Sigmoid colon (tissue), 7 donors: ENCODE measurements at regions of chr22 and their contacts with region 1.

Region 1: GRCh38 chr22:35582861-35583670 is 34.1 kb downstream of the MB start:
- DNase-seq: peak; percentile 86
- H3K4me3 ChIP-seq: no peak overlapping the region
- H3K27ac ChIP-seq: peak overlapping the region in 3 of 4 donors; percentile 76 to 78 (median 77)
- H3K4me1 ChIP-seq: peaks cover 0 to 42% (median 31%) of the 10 kb centered on the region in 4 donors
- H3K27me3 ChIP-seq: no peaks in the 10 kb centered on the region
- CTCF ChIP-seq: peak; percentile 93 to 96 (median 95)
- EP300 ChIP-seq: no peak
- POLR2A ChIP-seq: no peak

Region 2: DNA sequence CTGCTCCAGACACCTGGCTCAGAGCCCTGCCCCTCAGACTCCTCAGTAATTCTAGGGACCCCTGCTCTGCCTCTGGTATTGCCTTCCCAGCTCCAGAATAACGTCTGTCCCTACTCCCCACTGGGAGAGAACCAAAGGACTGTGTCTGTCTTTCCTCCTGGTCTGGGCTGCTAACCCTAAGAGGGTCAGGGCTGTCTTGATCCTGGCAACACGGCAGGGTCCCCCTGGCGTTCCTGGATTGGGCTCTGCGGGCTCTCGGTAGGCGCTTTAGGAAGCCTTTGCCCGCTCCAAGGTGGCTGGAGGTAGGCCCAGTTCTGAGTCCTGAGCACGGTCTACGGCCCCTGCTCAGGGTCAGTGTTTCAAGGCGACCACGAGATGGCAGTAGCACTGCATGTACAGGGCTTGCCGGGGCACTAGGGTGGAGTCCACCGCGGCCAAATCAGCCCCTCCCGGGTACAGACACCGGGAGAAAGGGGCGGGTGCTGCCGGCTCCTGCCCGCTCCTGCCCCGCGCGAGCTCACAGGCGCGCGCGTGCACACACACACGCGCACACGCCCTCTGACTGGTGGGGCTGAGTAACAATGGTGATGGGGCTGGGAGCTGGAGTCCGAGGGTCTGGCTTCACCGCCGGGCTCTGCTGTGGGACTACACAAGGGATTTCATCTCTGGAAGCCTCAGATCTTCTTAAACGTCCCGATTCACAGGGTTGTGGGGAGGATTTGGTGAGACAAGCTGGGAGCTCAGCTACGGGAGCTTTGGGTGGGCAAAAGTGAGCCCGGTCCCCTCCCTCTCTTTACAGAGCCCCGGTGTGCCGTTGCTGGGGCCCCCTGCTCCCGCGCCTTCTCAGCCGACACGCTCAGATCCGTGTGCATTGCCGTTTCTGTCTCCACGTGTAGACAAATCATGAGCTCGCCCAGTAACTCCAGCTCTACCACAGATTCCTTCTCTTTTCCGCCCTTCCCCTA is 232.2 kb before region 1 on chr22:
- intact Hi-C with region 1: loop called (anchors 2 kb)
- DNase-seq: peak; percentile 98
- H3K4me3 ChIP-seq: peak overlapping the region; percentile 27 to 57 (median 52)
- H3K27ac ChIP-seq: peak overlapping the region; percentile 82 to 88 (median 85)
- H3K4me1 ChIP-seq: peaks cover 6 to 41% (median 25%) of the 10 kb centered on the region in 4 donors
- H3K27me3 ChIP-seq: no peaks in the 10 kb centered on the region
- CTCF ChIP-seq: peak; percentile 79 to 97 (median 89)
- EP300 ChIP-seq: peak in 1 of 4 donors; percentile 34
- POLR2A ChIP-seq: peak in 1 of 2 donors; percentile 44

Region 3: GRCh38 chr22:35430897-35431322 is 152.2 kb before region 1 on chr22:
- intact Hi-C with region 1: loop called (anchors 1 kb)
- DNase-seq: peak; percentile 97
- H3K4me3 ChIP-seq: no peak overlapping the region
- H3K27ac ChIP-seq: peak overlapping the region; percentile 45 to 76 (median 73)
- H3K4me1 ChIP-seq: peaks cover 0 to 22% (median 19%) of the 10 kb centered on the region in 4 donors
- H3K27me3 ChIP-seq: no peaks in the 10 kb centered on the region
- CTCF ChIP-seq: peak; percentile 98 to 99 (median 99)
- EP300 ChIP-seq: peak in 3 of 4 donors; percentile 22 to 78 (median 55)
- POLR2A ChIP-seq: no peak

Region 4: DNA sequence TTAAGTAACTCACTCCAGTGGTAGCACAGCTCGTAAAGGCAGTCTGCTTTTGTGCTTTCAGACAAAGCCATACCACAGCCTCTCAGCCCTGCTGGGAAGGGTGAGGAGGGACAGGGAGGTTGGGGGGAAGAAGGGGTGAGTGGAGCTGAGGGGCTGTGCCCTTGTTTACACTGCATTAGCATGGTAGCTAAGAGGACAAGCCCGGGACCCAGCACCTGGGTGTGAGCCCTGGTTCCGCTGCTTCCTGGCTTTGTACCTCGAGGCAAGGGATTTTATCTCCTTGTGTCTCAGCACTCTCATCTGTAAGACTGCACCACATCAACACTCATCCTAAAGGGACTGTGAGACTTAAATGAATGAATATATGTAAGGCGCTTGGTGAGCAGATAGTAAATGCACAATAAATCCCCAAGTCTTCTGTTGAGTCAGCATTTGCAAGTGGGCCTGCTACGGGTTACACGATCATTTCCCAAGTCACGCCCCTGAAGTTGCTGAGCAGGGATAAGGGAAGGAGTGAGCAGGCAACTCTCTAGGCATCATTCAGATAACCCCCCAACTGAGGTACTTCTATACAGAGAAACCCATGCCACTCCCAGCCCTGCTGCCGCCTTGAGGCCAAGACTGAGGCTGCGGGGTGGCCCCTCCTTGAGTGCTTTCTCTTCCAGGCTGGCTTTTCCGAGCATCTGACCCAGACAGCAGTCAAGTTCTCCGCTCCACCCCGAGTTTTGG is 34.9 kb before region 1 on chr22:
- intact Hi-C with region 1: loop called (anchors 5 kb)
- DNase-seq: no peak
- H3K4me3 ChIP-seq: no peak overlapping the region
- H3K27ac ChIP-seq: peak overlapping the region in 3 of 4 donors; percentile 25 to 57 (median 55)
- H3K4me1 ChIP-seq: peaks cover 0 to 28% (median 23%) of the 10 kb centered on the region in 4 donors
- H3K27me3 ChIP-seq: no peaks in the 10 kb centered on the region
- CTCF ChIP-seq: no peak
- EP300 ChIP-seq: no peak
- POLR2A ChIP-seq: no peak

Region 5: DNA sequence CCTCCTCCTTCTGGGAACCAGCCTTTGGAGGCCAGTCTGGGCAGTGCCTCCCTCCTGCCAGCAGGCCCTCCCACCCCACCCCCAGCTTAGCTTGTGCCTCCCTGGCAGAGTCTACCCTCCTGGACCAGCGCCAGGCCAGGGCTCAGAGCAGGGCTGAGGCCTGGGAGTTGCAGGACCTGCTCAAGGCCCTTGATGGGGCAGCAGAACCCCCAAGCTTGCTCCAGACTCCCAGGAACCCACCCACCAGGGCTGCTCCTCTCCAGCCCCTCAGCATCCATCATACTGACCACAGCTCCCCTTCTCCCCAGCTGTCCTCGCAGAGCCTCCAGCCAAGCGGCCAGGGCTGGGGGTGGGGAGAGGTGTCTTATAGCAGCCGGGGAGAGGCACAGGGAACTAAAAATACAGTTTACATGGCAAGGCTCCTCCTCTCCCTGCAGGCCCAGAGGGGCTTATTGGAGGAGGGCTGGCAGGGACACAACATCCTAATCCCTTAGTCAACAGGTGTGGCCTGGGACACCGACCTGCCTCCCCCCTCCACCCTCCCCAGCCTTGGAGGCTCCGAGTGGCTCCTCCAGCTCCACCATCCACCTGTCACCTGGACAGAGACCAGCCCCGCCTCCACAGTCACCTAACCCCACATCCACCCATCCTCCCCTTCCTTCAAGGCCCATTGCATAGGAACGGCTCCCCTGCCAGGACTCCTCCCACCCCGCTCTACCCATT is 39.3 kb after region 1 on chr22:
- intact Hi-C with region 1: loop called (anchors 2 kb)
- DNase-seq: peak; percentile 88
- H3K4me3 ChIP-seq: no peak overlapping the region
- H3K27ac ChIP-seq: peak overlapping the region; percentile 80 to 85 (median 82)
- H3K4me1 ChIP-seq: peaks cover 0 to 42% (median 36%) of the 10 kb centered on the region in 4 donors
- H3K27me3 ChIP-seq: no peaks in the 10 kb centered on the region
- CTCF ChIP-seq: no peak
- EP300 ChIP-seq: peak in 1 of 4 donors; percentile 2
- POLR2A ChIP-seq: no peak